Activated B cell treated with CpG ODN at 0.5 μM for 24 hours (primary cell): ENCODE measurements at regions of chr12 and their contacts with region 1.

Region 1: GRCh38 chr12:106282457-106283097 is 20.0 kb upstream of the TCP11L2 start:
- DNase-seq: no peak
- ATAC-seq: peak; percentile 84
- H3K4me3 Mint-ChIP-seq: no peak overlapping the region
- H3K27ac Mint-ChIP-seq: no peak overlapping the region
- H3K4me1 Mint-ChIP-seq: peaks cover 29% of the 10 kb centered on the region
- H3K27me3 Mint-ChIP-seq: peaks cover 5% of the 10 kb centered on the region
- CTCF ChIP-seq: peak; percentile 76

Region 2: DNA sequence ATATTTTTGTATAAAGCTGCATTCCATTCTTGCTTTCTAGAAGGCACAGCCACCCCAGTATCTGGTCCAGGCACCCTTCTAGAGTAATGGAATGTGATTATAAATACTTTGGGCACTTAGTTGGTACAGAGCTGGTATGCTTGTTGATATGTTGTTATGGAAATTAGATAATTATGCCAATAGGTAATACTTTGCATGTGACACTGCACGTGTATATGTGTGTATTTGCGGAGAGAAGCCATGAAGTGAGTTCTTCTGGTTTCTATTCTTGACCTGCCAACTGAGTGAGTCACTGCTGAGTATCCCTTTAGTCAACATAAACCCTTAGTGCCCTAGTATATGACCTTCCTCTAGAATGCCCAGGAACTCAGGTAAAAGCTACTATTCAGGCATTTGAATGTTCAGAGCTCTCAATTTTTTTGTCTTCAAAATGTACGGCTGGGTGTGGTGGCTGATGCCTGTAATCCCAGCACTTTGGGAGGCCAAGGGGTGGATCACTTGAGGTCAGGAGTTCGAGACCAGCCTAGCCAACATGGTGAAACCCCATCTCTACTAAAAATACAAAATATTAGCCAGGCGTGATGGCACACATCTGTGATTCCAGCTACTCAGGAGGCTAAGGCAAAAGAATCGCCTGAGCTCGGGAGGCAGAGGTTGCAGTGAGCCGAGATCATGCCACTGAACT is 13.8 kb after region 1 on chr12:
- CTCF ChIA-PET with region 1: interaction called, 31 read pairs
- POLR2A ChIA-PET with region 1: interaction called, 27 read pairs
- intact Hi-C with region 1: loop called (anchors 1 kb)
- DNase-seq: no peak
- ATAC-seq: no peak
- H3K4me3 Mint-ChIP-seq: no peak overlapping the region
- H3K27ac Mint-ChIP-seq: no peak overlapping the region
- H3K4me1 Mint-ChIP-seq: peaks cover 33% of the 10 kb centered on the region
- H3K27me3 Mint-ChIP-seq: no peaks in the 10 kb centered on the region
- CTCF ChIP-seq: no peak

Region 3: GRCh38 chr12:107645630-107646333 is 1363.2 kb after region 1 on chr12:
- CTCF ChIA-PET with region 1: no interaction called
- POLR2A ChIA-PET with region 1: no interaction called
- intact Hi-C with region 1: no loop called
- DNase-seq: no peak
- ATAC-seq: no peak
- H3K4me3 Mint-ChIP-seq: no peak overlapping the region
- H3K27ac Mint-ChIP-seq: no peak overlapping the region
- H3K4me1 Mint-ChIP-seq: no peaks in the 10 kb centered on the region
- H3K27me3 Mint-ChIP-seq: no peaks in the 10 kb centered on the region
- CTCF ChIP-seq: no peak